ENCODE measurements at regions of chr20 and their contacts with region 1.

Region 1: DNA sequence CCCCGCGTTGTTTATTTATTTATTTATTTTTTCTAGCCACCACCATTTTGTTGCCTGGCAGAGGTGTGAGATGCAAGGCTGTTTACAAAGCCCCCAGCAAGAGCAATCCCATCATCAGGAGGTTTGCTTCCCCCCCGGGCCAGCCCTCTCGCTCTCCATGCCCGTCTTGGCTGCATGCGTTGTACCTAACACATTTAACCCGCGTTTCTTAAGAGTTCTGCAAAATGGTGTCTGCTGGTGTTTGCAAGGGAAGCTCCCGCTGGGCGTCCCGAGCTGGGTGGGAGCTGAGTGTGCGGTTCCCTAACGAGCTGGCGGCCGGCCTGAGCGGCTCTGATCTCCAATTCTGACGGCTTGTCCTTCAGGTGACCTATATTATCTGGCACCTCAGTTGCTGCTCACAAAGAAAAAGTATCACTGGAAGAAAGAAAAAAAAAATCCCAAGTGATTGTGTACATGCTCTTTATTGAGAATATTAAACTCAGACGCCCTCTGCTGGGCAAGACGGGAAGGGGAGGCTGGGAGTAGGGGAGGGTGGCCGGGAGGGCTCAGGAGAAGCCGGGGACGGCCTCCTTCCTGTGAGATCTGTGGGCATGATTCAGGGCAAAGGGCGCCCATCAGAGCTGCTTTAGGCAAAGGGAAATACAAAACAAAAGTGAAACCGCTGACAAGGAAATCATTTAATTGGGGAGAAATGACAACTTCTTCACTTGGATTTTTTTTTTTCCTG is 154.8 kb downstream of the BCAS1 start:
- DNase-seq: peak; percentile 91
- ATAC-seq: peak; percentile 94
- H3K4me3 ChIP-seq: peak overlapping the region; percentile 69 to 83 (median 74)
- H3K4me3 Mint-ChIP-seq: peak overlapping the region; percentile 94
- H3K27ac ChIP-seq: peak overlapping the region; percentile 45 to 68
- H3K27ac Mint-ChIP-seq: peak overlapping the region; percentile 90
- H3K4me1 ChIP-seq: peaks cover 17 to 38% of the 10 kb centered on the region in 2 donors
- H3K4me1 Mint-ChIP-seq: peaks cover 40% of the 10 kb centered on the region
- H3K27me3 ChIP-seq: no peaks in the 10 kb centered on the region
- H3K27me3 Mint-ChIP-seq: no peaks in the 10 kb centered on the region
- CTCF ChIP-seq: peak; percentile 86

Region 2: DNA sequence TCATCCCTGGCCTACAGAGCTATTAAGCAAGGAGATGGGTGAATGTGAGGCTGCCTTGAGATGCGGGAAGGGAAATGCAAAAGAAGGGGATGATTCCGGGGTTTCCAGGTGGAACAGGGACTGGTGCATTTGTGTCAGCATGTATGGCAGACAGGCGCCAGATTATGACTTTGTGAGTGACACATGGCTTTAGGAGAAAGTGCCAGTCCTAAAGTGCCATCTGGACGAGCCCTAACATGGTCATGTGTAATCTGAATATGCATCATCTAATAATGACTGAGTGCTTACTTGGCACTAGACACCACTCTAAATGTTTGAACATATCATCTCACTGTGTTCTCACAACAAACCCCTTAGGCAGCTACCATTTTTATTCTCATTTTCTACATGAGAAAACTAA is 1138.4 kb before region 1 on chr20:
- CTCF ChIA-PET with region 1: no interaction called
- POLR2A ChIA-PET with region 1: no interaction called
- intact Hi-C with region 1: no loop called
- DNase-seq: no peak
- ATAC-seq: no peak
- H3K4me3 ChIP-seq: no peak overlapping the region
- H3K4me3 Mint-ChIP-seq: no peak overlapping the region
- H3K27ac ChIP-seq: no peak overlapping the region
- H3K27ac Mint-ChIP-seq: no peak overlapping the region
- H3K4me1 ChIP-seq: no peaks in the 10 kb centered on the region
- H3K4me1 Mint-ChIP-seq: no peaks in the 10 kb centered on the region
- H3K27me3 ChIP-seq: no peaks in the 10 kb centered on the region
- H3K27me3 Mint-ChIP-seq: peaks cover 28% of the 10 kb centered on the region
- CTCF ChIP-seq: no peak

Region 3: DNA sequence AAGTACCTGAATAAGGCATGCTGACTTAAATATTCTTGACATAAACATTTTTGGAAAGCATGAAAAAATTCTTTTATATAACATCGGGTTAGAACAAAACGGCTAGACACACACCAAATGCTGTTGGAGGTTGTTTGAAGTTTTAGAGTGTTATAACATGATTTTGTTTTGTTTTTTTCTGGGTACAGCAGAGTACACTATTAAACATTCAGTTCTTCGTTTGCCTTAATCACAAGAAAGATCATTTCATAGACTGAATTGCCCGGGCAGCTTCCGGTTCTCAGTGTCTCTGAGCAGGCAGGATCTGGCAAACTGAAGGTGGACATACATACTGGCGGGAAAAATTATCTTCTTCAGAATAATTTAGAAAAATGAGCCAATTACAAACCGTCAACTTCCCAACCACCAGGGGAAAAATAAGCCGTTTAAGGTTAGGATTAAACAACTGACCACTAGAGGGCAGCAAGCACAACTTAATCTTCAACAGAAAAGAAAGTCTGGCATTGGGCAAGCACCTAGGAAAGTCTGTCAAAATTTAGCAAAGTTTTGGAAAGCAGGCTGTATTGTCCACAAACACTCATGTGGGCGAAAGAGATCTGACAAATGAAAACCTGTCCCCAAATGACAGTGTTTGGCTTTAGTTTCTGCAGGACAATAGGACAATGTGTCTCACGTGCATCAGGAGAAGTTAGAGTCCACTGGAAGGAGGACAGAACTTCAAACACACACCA is 337.0 kb before region 1 on chr20:
- CTCF ChIA-PET with region 1: interaction called, 123 read pairs
- POLR2A ChIA-PET with region 1: no interaction called
- intact Hi-C with region 1: loop called (anchors 1 kb)
- DNase-seq: peak; percentile 91
- ATAC-seq: peak; percentile 62
- H3K4me3 ChIP-seq: peak overlapping the region in 1 of 5 experiments; percentile 45
- H3K4me3 Mint-ChIP-seq: peak overlapping the region; percentile 73
- H3K27ac ChIP-seq: peak overlapping the region; percentile 54 to 77
- H3K27ac Mint-ChIP-seq: peak overlapping the region; percentile 93
- H3K4me1 ChIP-seq: peaks cover 53 to 58% of the 10 kb centered on the region in 2 donors
- H3K4me1 Mint-ChIP-seq: peaks cover 54% of the 10 kb centered on the region
- H3K27me3 ChIP-seq: no peaks in the 10 kb centered on the region
- H3K27me3 Mint-ChIP-seq: no peaks in the 10 kb centered on the region
- CTCF ChIP-seq: peak; percentile 94

Region 4: DNA sequence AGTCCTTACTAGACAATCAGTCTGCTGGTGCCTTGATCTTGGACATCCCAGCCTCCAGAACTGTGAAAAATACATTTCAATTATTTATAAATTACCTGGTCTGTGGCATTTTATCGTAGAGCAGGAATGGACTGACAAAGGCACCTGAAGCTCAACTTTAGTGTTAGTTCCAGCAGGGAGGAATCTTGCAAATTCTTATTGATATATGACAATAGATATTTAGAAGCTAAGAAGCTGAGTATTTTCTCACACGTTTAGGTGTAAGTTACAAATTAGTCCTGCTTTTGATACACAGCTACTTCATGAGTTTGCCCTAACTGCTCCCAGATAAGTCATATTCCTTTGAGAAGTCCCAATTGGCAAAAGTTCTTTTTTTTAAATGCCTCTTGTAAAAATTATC is 184.0 kb before region 1 on chr20:
- CTCF ChIA-PET with region 1: interaction called, 24 read pairs
- POLR2A ChIA-PET with region 1: interaction called, 3 read pairs
- intact Hi-C with region 1: loop called (anchors 5 kb)
- DNase-seq: no peak
- ATAC-seq: no peak
- H3K4me3 ChIP-seq: no peak overlapping the region
- H3K4me3 Mint-ChIP-seq: no peak overlapping the region
- H3K27ac ChIP-seq: no peak overlapping the region
- H3K27ac Mint-ChIP-seq: no peak overlapping the region
- H3K4me1 ChIP-seq: peaks cover 29 to 32% of the 10 kb centered on the region in 2 donors
- H3K4me1 Mint-ChIP-seq: peaks cover 43% of the 10 kb centered on the region
- H3K27me3 ChIP-seq: no peaks in the 10 kb centered on the region
- H3K27me3 Mint-ChIP-seq: no peaks in the 10 kb centered on the region
- CTCF ChIP-seq: no peak

Region 5: GRCh38 chr20:53839423-53840176 is 76.0 kb before region 1 on chr20:
- CTCF ChIA-PET with region 1: interaction called, 10 read pairs
- POLR2A ChIA-PET with region 1: no interaction called
- intact Hi-C with region 1: loop called (anchors 10 kb)
- DNase-seq: peak; percentile 79
- ATAC-seq: peak; percentile 81
- H3K4me3 ChIP-seq: peak overlapping the region in 2 of 5 experiments; percentile 1 to 30
- H3K4me3 Mint-ChIP-seq: peak overlapping the region; percentile 86
- H3K27ac ChIP-seq: peak overlapping the region; percentile 69 to 78
- H3K27ac Mint-ChIP-seq: peak overlapping the region; percentile 96
- H3K4me1 ChIP-seq: peaks cover 62 to 71% of the 10 kb centered on the region in 2 donors
- H3K4me1 Mint-ChIP-seq: peaks cover 73% of the 10 kb centered on the region
- H3K27me3 ChIP-seq: no peaks in the 10 kb centered on the region
- H3K27me3 Mint-ChIP-seq: no peaks in the 10 kb centered on the region
- CTCF ChIP-seq: no peak

Region 6: DNA sequence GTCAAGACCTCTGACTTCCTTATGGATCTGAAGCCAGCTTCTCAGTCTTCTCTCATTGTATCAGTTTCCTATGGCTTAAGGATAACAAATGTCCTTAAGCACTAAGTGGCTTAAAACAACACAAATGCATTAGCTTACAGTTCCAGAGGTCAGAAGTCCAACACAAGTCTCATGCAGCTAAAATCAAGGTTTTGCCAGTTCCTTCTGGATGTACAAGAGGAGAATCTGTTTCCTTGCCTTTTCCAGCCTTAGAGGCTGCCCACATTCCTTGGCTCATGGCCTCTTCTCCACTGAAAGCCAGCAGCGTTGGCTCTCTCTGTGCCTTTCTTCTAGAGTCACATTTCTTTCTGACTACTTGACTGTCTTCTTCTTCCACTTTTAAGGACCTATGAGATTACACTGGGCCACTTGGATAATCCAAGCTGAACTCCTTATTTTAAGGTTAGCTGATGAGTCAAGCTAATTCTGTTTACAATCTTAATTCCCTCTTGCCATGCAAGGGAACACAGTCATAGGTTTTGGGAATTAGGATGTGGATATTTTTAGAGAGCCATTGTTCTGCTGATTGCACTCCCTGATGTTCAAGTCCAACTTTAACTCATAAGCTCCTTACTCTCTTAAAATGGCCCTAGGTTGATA is 24.2 kb before region 1 on chr20:
- CTCF ChIA-PET with region 1: interaction called, 21 read pairs
- POLR2A ChIA-PET with region 1: interaction called, 3 read pairs
- intact Hi-C with region 1: loop called (anchors 2 kb)
- DNase-seq: no peak
- ATAC-seq: no peak
- H3K4me3 ChIP-seq: no peak overlapping the region
- H3K4me3 Mint-ChIP-seq: no peak overlapping the region
- H3K27ac ChIP-seq: no peak overlapping the region
- H3K27ac Mint-ChIP-seq: peak overlapping the region; percentile 43
- H3K4me1 ChIP-seq: peaks cover 24 to 34% of the 10 kb centered on the region in 2 donors
- H3K4me1 Mint-ChIP-seq: peaks cover 40% of the 10 kb centered on the region
- H3K27me3 ChIP-seq: no peaks in the 10 kb centered on the region
- H3K27me3 Mint-ChIP-seq: no peaks in the 10 kb centered on the region
- CTCF ChIP-seq: no peak

Region 7: DNA sequence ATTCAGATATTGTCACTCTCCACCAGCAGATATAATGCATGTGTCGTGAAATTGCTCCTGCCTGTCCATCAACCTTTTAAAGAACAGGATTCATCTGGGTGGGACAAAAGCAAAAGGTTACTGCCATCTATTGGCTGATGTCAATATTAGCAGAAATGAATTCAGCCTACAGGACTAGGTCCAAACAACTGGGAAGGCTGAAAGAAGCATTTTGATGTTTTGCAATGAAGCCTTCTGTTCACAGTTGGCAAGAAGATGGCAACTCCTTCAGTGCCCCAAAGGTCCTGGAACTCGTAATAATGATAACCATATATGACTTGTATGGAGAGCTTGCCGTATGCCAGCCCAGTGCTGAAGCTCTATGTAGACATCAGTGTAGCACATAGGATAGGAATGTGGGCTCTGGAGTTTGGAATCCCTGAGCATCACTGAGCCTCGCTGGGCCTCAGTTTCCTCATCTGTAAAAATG is 147.2 kb after region 1 on chr20:
- CTCF ChIA-PET with region 1: interaction called, 10 read pairs
- POLR2A ChIA-PET with region 1: no interaction called
- intact Hi-C with region 1: no loop called
- DNase-seq: peak; percentile 56
- ATAC-seq: no peak
- H3K4me3 ChIP-seq: no peak overlapping the region
- H3K4me3 Mint-ChIP-seq: no peak overlapping the region
- H3K27ac ChIP-seq: no peak overlapping the region
- H3K27ac Mint-ChIP-seq: no peak overlapping the region
- H3K4me1 ChIP-seq: peaks cover 0 to 26% of the 10 kb centered on the region in 2 donors
- H3K4me1 Mint-ChIP-seq: peaks cover 31% of the 10 kb centered on the region
- H3K27me3 ChIP-seq: no peaks in the 10 kb centered on the region
- H3K27me3 Mint-ChIP-seq: no peaks in the 10 kb centered on the region
- CTCF ChIP-seq: peak; percentile 73

Region 8: DNA sequence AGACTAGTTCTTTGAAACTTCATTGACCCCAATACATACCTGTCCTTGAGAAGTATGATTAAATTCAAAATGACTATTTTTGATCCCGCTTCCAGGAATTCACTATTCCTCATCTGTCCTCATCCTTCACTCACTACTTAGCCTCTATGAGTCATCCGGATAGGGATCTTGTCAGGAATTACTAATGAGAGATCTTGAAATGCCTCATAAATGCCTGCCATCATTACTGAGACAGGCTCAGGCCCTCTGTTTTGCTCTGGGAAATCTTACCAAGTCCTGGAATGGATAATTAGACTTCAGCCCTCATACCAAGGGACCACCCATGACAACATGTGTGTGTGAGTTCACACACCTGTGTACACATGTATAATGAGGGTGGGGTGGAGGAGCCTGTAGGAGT is 261.0 kb after region 1 on chr20:
- CTCF ChIA-PET with region 1: no interaction called
- POLR2A ChIA-PET with region 1: no interaction called
- intact Hi-C with region 1: no loop called
- DNase-seq: no peak
- ATAC-seq: no peak
- H3K4me3 ChIP-seq: no peak overlapping the region
- H3K4me3 Mint-ChIP-seq: no peak overlapping the region
- H3K27ac ChIP-seq: no peak overlapping the region
- H3K27ac Mint-ChIP-seq: no peak overlapping the region
- H3K4me1 ChIP-seq: peaks cover 5 to 14% of the 10 kb centered on the region in 2 donors
- H3K4me1 Mint-ChIP-seq: peaks cover 17% of the 10 kb centered on the region
- H3K27me3 ChIP-seq: peaks cover 0 to 36% (median 20%) of the 10 kb centered on the region in 4 experiments
- H3K27me3 Mint-ChIP-seq: peaks cover 46% of the 10 kb centered on the region
- CTCF ChIP-seq: no peak